GM12878 (cell line): ENCODE measurements at regions of chr5 and their contacts with region 1.

Region 1: GRCh38 chr5:56909294-56910209 is at the start of gene SETD9:
- DNase-seq: peak; percentile 86
- ATAC-seq: peak; percentile 90
- H3K4me3 ChIP-seq: peak within 1 kb of the TSS; percentile 79
- H3K27ac ChIP-seq: peak within 1 kb of the TSS; percentile 91
- H3K4me1 ChIP-seq: peaks cover 7% of the 10 kb centered on the region
- H3K27me3 ChIP-seq: no peaks in the 10 kb centered on the region
- CTCF ChIP-seq: no peak
- EP300 ChIP-seq: no peak
- POLR2A ChIP-seq: peak; percentile 98
- RAD21 ChIP-seq: no peak
- polyA plus RNA-seq, gene SETD9: 12.9 to 17.1 TPM

Region 2: GRCh38 chr5:56802205-56802604 is 107.3 kb before region 1 on chr5:
- CTCF ChIA-PET with region 1: no interaction called
- POLR2A ChIA-PET with region 1: no interaction called
- RAD21 ChIA-PET with region 1: no interaction called
- SMC1A ChIA-PET with region 1: no interaction called
- in situ Hi-C with region 1: no loop called
- intact Hi-C with region 1: no loop called
- DNase-seq: no peak
- ATAC-seq: no peak
- H3K4me3 ChIP-seq: no peak overlapping the region
- H3K27ac ChIP-seq: no peak overlapping the region
- H3K4me1 ChIP-seq: no peaks in the 10 kb centered on the region
- H3K27me3 ChIP-seq: no peaks in the 10 kb centered on the region
- CTCF ChIP-seq: no peak
- EP300 ChIP-seq: no peak
- POLR2A ChIP-seq: no peak
- RAD21 ChIP-seq: no peak

Region 3: DNA sequence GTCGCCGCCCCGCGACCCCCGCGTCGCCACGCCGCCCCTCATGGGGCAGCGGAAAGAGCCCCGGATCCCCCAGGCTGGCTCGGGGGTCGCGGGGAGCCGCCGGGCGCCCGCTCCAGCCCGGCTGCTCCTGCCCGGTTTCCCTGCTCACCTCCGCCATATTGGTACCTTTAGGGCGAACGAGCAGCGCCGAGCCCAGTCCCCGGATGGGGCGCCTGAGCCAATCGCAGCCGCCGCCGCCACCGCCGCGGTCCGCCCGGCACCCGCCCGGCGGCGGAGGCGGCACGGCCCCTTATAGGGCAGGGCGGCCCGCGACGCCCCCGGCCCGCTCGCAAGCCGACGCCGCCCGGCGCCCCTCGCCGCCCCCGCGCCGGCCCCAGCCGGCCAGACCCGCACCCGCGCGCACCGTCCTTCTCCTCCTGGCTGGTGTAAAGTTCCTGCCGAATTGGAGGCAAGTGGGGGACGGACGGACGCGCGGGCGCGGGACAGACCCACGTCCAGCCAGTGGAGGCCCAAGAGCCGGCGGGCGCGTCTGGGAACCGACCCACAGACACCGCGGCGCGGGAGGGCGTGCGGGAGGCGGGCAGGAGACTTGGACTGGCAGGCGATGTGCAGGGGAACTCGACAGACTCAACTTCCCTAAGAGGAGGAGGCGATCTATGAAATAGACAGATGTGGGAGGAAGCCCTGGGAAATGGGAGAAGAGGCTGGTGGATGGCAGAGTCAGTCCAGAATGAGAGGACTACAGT is 42.6 kb after region 1 on chr5 and contains the start of gene MIER3:
- CTCF ChIA-PET with region 1: interaction called, 7 read pairs
- POLR2A ChIA-PET with region 1: interaction called, 8 read pairs
- RAD21 ChIA-PET with region 1: interaction called, 10 read pairs
- SMC1A ChIA-PET with region 1: interaction called, 15 read pairs
- in situ Hi-C with region 1: no loop called
- intact Hi-C with region 1: loop called (anchors 2 kb)
- DNase-seq: no peak
- ATAC-seq: peak; percentile 90
- H3K4me3 ChIP-seq: peak within 1 kb of the TSS; percentile 90
- H3K27ac ChIP-seq: peak within 1 kb of the TSS; percentile 63
- H3K4me1 ChIP-seq: no peaks in the 10 kb centered on the region
- H3K27me3 ChIP-seq: no peaks in the 10 kb centered on the region; a peak in 1 of 4 replicates
- CTCF ChIP-seq: no peak
- EP300 ChIP-seq: no peak
- POLR2A ChIP-seq: peak; percentile 83
- RAD21 ChIP-seq: no peak
- polyA plus RNA-seq, gene MIER3: 2.9 to 3.5 TPM

Region 4: GRCh38 chr5:56973473-56973872 is 63.9 kb after region 1 on chr5:
- CTCF ChIA-PET with region 1: no interaction called
- POLR2A ChIA-PET with region 1: no interaction called
- RAD21 ChIA-PET with region 1: no interaction called
- SMC1A ChIA-PET with region 1: no interaction called
- in situ Hi-C with region 1: no loop called
- intact Hi-C with region 1: no loop called
- DNase-seq: no peak
- ATAC-seq: no peak
- H3K4me3 ChIP-seq: no peak overlapping the region
- H3K27ac ChIP-seq: no peak overlapping the region
- H3K4me1 ChIP-seq: no peaks in the 10 kb centered on the region
- H3K27me3 ChIP-seq: peaks cover 0 to 6% of the 10 kb centered on the region in 2 experiments; a peak in 2 of 4 replicates
- CTCF ChIP-seq: no peak
- EP300 ChIP-seq: no peak
- POLR2A ChIP-seq: no peak
- RAD21 ChIP-seq: no peak

Region 5: DNA sequence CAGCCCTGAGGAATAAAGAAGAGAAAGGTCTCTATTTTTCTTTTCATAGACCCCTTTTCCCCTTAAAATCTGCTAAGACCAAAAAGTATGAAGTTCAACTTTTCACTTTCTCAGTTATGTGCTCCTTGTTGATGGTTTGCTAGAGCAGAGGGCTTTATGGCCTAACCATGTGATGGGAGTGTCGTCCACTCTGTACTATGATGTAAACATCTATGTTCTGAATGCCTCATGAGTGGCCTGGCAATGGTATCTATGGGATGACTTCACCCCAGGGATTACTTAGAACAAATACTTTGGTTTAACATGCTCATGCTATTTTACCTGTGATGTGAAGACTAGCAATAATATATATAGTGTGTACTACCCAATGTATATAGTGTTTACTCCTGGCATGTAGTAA is 86.0 kb after region 1 on chr5:
- CTCF ChIA-PET with region 1: no interaction called
- POLR2A ChIA-PET with region 1: no interaction called
- RAD21 ChIA-PET with region 1: no interaction called
- SMC1A ChIA-PET with region 1: no interaction called
- in situ Hi-C with region 1: no loop called
- intact Hi-C with region 1: loop called (anchors 5 kb)
- DNase-seq: no peak
- ATAC-seq: no peak
- H3K4me3 ChIP-seq: no peak overlapping the region
- H3K27ac ChIP-seq: no peak overlapping the region
- H3K4me1 ChIP-seq: no peaks in the 10 kb centered on the region
- H3K27me3 ChIP-seq: no peaks in the 10 kb centered on the region; a peak in 2 of 4 replicates
- CTCF ChIP-seq: no peak
- EP300 ChIP-seq: no peak
- POLR2A ChIP-seq: no peak
- RAD21 ChIP-seq: no peak

Region 6: GRCh38 chr5:57202811-57203210 is 293.3 kb after region 1 on chr5:
- CTCF ChIA-PET with region 1: no interaction called
- POLR2A ChIA-PET with region 1: no interaction called
- RAD21 ChIA-PET with region 1: no interaction called
- SMC1A ChIA-PET with region 1: no interaction called
- in situ Hi-C with region 1: no loop called
- intact Hi-C with region 1: no loop called
- DNase-seq: no peak
- ATAC-seq: no peak
- H3K4me3 ChIP-seq: no peak overlapping the region
- H3K27ac ChIP-seq: no peak overlapping the region
- H3K4me1 ChIP-seq: peaks cover 3% of the 10 kb centered on the region; the same call in 1 of the 2 replicates
- H3K27me3 ChIP-seq: no peaks in the 10 kb centered on the region
- CTCF ChIP-seq: no peak
- EP300 ChIP-seq: no peak
- POLR2A ChIP-seq: no peak
- RAD21 ChIP-seq: no peak

Region 7: DNA sequence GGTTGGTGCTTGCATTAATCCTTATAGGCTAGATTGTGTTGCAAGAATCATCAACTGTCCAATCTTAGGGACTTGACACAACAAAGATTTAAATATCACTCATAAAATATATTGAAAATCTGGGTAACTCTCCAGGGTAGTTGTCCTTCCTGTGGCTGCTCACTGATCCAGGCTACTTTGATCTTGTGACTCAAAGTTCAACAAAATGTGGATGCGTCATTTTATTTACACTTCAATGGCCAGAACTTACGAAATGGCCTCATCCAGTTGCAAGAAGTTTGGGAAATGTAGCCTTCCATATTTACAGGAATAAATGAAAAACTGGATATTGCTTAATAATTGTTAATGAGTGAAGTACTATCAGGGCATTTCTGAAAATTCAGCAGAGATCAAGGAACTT is 808.6 kb after region 1 on chr5:
- CTCF ChIA-PET with region 1: no interaction called
- POLR2A ChIA-PET with region 1: no interaction called
- RAD21 ChIA-PET with region 1: no interaction called
- SMC1A ChIA-PET with region 1: no interaction called
- in situ Hi-C with region 1: no loop called
- intact Hi-C with region 1: no loop called
- DNase-seq: no peak
- ATAC-seq: no peak
- H3K4me3 ChIP-seq: no peak overlapping the region
- H3K27ac ChIP-seq: no peak overlapping the region
- H3K4me1 ChIP-seq: no peaks in the 10 kb centered on the region
- H3K27me3 ChIP-seq: no peaks in the 10 kb centered on the region
- CTCF ChIP-seq: no peak
- EP300 ChIP-seq: no peak
- POLR2A ChIP-seq: no peak
- RAD21 ChIP-seq: no peak